ENCODE measurements at regions of chr1 and their contacts with region 1.

Region 1: GRCh38 chr1:235971571-235972310 is 93.1 kb downstream of the NID1 start:
- DNase-seq: peak; percentile 90
- H3K4me3 Mint-ChIP-seq: peak overlapping the region; percentile 47
- H3K27ac Mint-ChIP-seq: peak overlapping the region; percentile 68
- H3K4me1 Mint-ChIP-seq: peaks cover 16% of the 10 kb centered on the region
- H3K27me3 Mint-ChIP-seq: peaks cover 17% of the 10 kb centered on the region

Region 2: DNA sequence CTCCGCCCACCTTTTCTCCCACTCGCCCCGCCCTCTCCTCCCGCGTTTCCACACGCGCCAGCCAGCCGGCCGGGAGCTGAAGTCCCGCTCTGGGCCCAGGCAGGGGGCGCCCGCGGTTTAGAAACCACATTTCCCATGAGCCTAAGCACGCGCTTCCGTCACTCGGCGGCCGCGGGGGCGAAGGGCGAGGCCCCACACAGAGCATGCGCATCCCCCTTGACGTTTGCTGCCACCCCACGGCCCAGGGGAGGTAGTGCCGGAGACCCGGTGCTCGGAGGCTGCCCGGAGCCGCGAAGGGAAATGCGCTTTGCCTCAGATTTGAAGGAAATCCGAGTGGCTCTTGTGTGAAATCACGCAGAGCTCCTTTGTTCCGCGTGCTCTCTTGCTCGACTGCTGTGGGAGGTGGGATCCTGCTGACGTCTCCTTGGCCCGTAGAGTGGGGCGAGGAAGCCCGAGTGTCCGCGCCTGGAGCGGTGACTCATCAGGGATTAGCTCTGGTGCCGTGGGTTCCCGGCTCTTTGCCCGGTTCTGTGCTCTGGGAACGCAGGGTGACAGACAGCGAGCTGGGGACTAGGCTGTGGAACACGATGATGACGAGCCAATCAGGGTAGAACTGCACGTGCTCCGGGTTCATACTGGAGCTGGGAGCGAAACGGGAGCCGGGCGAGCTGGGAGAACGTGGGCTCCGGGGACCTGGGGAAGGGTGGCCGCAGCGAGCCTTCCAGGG is 467.1 kb before region 1 on chr1:
- CTCF ChIA-PET with region 1: interaction called, 16 read pairs
- POLR2A ChIA-PET with region 1: interaction called, 10 read pairs
- DNase-seq: peak; percentile 99
- H3K4me3 Mint-ChIP-seq: peak overlapping the region; percentile 94
- H3K27ac Mint-ChIP-seq: peak overlapping the region; percentile 98
- H3K4me1 Mint-ChIP-seq: peaks cover 26% of the 10 kb centered on the region
- H3K27me3 Mint-ChIP-seq: peaks cover 5% of the 10 kb centered on the region

Region 3: DNA sequence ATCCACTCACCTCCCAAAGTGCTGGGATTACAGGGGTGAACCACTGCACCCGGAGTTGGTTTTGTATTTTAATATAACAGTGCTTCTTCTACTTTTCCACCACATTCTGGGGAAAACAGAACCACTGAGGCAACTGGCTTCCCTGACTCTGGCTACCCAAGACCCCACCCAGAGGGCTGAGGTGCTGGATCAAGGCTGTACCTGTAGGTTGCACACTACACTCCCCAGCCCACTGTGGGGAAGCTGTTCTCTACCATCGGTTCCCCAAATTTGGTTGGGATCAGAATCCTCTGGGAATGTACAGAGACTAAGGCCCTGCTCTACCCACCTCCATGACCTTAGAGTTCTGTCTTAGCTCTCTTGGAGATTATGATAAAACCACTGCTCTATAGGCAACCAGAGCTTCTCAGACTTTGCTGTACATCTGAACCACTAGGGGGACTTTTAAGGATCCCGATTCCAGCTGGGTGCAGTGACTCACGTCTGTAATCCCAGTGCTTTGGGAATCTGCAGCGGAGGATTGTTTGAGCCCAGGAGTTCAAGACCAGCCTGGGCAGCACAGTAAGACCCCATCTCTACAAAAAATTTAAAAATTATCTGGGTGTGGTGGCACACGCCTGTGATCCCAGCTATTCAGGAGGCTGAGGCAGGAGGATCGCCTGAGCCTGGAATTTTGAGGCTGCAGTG is 373.7 kb before region 1 on chr1:
- CTCF ChIA-PET with region 1: interaction called, 16 read pairs
- POLR2A ChIA-PET with region 1: no interaction called
- DNase-seq: no peak
- H3K4me3 Mint-ChIP-seq: no peak overlapping the region
- H3K27ac Mint-ChIP-seq: no peak overlapping the region
- H3K4me1 Mint-ChIP-seq: peaks cover 6% of the 10 kb centered on the region
- H3K27me3 Mint-ChIP-seq: peaks cover 7% of the 10 kb centered on the region

Region 4: DNA sequence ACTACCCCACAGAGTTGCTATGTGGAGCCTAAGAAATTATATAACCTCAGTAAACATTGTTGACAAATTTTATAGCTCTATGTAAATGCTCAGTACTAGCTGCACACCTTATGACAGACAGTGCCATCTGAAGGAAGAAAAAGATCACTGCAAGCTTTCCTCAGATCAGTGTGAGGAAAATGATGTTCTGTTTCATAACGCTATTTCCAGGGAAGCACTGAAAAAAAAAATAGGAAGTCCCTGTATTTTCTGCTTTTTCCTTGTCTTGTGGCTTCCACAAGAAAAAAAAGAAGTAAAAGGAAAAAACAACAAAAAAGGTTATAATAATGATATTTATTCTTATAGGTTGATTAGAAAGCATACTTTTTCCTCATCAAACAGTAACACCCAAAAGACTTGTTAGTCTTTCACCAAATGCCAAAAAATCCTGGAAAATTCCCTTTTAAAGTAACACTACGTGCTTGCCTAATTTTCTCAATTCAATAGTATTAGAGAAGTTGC is 128.2 kb before region 1 on chr1:
- CTCF ChIA-PET with region 1: interaction called, 14 read pairs
- POLR2A ChIA-PET with region 1: no interaction called
- DNase-seq: no peak
- H3K4me3 Mint-ChIP-seq: no peak overlapping the region
- H3K27ac Mint-ChIP-seq: no peak overlapping the region
- H3K4me1 Mint-ChIP-seq: peaks cover 33% of the 10 kb centered on the region
- H3K27me3 Mint-ChIP-seq: no peaks in the 10 kb centered on the region

Region 5: GRCh38 chr1:235866913-235867845 is 104.6 kb before region 1 on chr1:
- CTCF ChIA-PET with region 1: interaction called, 88 read pairs
- POLR2A ChIA-PET with region 1: interaction called, 29 read pairs
- DNase-seq: peak; percentile 98
- H3K4me3 Mint-ChIP-seq: peak overlapping the region; percentile 91
- H3K27ac Mint-ChIP-seq: peak overlapping the region; percentile 94
- H3K4me1 Mint-ChIP-seq: peaks cover 54% of the 10 kb centered on the region
- H3K27me3 Mint-ChIP-seq: no peaks in the 10 kb centered on the region

Region 6: GRCh38 chr1:235960809-235961208 is 10.9 kb before region 1 on chr1:
- CTCF ChIA-PET with region 1: interaction called, 17 read pairs
- POLR2A ChIA-PET with region 1: interaction called, 3 read pairs
- DNase-seq: no peak
- H3K4me3 Mint-ChIP-seq: no peak overlapping the region
- H3K27ac Mint-ChIP-seq: no peak overlapping the region
- H3K4me1 Mint-ChIP-seq: peaks cover 4% of the 10 kb centered on the region
- H3K27me3 Mint-ChIP-seq: peaks cover 34% of the 10 kb centered on the region

Measured in activated CD4-positive, alpha-beta memory T cell treated with anti-CD3 and anti-CD28 coated beads, Interleukin-2, amount 10 ng/mL, durations not matched to agents 7 days and 5 days (primary cell).